ENCODE measurements at regions of chr6 and their contacts with region 1.

Region 1: DNA sequence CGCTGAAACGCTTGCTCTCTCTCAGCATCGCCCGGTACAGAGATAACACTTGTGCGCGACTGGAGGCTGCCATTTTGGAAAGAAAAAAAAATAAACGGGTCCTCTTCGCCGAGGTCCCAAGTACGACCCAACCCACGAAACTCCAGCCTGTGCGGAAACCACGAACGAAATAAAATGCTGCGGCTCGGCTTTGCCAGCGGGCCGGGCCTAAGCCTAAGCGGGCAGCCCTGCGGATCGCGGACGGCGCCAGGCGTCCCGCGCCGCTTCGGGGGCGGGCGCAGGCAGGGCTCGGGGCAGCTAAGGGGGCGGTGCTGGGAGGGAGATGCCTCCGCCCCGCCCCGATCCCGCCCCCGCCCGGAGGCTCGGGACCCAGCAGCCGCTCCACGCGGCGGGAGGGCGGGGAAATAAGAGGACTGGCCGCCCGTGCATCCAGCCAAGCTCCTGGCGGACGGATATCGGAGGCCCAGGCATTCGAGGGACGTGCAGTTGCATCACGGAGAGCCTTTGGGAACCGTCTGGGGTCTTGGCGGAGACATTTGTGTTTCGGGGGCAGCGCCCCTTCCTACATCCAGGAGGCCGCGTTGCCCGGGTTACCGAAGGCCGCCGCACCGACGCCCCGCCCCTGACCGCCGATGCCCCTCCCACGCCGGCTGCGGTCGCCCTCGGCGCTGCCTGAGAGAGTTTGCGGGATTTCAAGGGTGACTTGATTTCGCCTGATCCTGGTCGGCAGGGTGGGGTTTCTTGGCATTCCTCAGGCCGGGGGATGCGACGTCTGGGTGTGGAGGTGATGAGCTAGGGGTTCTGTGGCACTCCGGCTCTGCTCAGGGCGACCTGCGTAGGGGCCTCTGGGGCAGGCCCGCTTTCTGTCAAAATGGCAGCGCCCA is at the starts of genes FARS2 and LYRM4:
- DNase-seq: peak; percentile 86 to 99 (median 97)
- ATAC-seq: peak; percentile 91
- H3K4me3 ChIP-seq: peak within 1 kb of the TSS; percentile 63
- H3K4me3 Mint-ChIP-seq: peak within 1 kb of the TSS; percentile 94 to 100 (median 98)
- H3K27ac ChIP-seq: peak within 1 kb of the TSS; percentile 93
- H3K27ac Mint-ChIP-seq: peak within 1 kb of the TSS; percentile 99 to 100 (median 100)
- H3K4me1 ChIP-seq: peaks cover 9 to 13% of the 10 kb centered on the region in 2 donors
- H3K4me1 Mint-ChIP-seq: peaks cover 18 to 63% (median 43%) of the 10 kb centered on the region in 7 donors
- H3K27me3 ChIP-seq: no peaks in the 10 kb centered on the region
- H3K27me3 Mint-ChIP-seq: no peaks in the 10 kb centered on the region
- total RNA-seq, gene FARS2: 16.2 to 23.1 (median 20.3) TPM
- total RNA-seq, gene LYRM4: 15.1 to 27.2 (median 22.4) TPM

Region 2: DNA sequence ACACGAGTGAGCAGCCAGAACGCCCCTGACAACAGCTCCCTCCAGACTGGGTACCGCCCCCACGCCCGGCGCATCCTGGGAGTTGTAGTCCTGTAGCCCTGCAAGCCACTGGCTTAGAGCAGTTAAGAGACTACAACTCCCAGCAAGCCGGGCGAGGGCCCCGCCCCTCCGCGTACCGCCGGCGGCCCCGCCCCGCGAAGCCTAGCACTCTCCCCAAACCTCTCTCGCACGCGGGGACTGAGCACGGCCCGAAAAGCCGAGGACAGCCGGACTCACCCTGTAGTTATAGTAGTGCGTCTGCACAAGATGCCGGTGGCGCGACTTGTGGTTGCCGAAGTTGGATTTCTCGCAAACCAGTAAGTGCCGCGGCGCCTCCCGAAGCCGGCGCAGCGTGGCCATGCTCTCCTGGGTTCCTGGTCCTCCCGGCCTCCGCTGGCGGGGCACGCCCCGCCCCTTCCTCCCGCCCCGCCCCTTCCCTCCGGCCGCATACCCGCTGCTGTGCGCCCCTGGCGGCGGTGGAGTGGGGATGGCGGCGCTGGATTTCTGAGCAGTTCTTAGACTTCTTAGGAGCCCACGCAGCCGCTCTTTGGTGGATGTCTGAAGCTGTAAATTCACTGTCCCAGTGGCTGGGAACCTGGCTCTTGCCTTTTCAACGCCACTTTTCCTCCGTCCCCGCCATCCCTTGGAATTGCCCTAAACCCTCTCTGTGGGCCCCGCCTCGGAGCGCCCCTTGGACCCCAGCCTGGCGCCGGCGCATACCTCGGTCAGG is 257.1 kb before region 1 on chr6 and contains the start of gene RPP40:
- CTCF ChIA-PET with region 1: no interaction called
- POLR2A ChIA-PET with region 1: no interaction called
- intact Hi-C with region 1: loop called (anchors 1 kb)
- DNase-seq: peak; percentile 97 to 99 (median 99)
- ATAC-seq: peak; percentile 97
- H3K4me3 ChIP-seq: peak within 1 kb of the TSS; percentile 91
- H3K4me3 Mint-ChIP-seq: peak within 1 kb of the TSS; percentile 88 to 95 (median 94)
- H3K27ac ChIP-seq: peak within 1 kb of the TSS; percentile 82
- H3K27ac Mint-ChIP-seq: peak within 1 kb of the TSS; percentile 91 to 98 (median 94)
- H3K4me1 ChIP-seq: peaks cover 9% of the 10 kb centered on the region in 2 donors
- H3K4me1 Mint-ChIP-seq: peaks cover 0 to 20% (median 13%) of the 10 kb centered on the region in 7 donors
- H3K27me3 ChIP-seq: no peaks in the 10 kb centered on the region
- H3K27me3 Mint-ChIP-seq: no peaks in the 10 kb centered on the region
- total RNA-seq, gene RPP40: 3.8 to 8.0 (median 5.1) TPM

Region 3: DNA sequence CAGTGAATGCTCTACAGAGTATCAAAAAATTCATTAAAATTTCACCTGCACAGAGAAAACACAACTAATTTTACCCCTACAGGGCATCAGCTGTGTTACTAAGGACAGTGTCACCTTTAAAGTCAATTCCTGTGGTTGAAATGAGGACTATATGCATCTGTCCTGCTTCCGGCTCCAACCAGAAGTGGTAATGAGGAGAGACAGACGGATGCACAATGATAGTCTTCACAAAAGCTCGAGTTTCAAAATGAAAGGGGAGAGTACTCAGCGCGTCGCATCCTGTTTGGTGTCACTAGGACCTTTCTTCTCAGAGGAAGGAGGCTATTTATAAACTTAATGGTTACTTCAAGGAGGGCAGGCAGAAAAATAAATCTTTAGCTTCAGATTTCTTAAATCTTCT is 86.7 kb before region 1 on chr6:
- CTCF ChIA-PET with region 1: interaction called, 6 read pairs
- POLR2A ChIA-PET with region 1: interaction called, 20 read pairs
- intact Hi-C with region 1: loop called (anchors 1 kb)
- DNase-seq: peak in 8 of 9 donors; percentile 34 to 79 (median 71)
- ATAC-seq: peak; percentile 93
- H3K4me3 ChIP-seq: peak overlapping the region; percentile 46
- H3K4me3 Mint-ChIP-seq: peak overlapping the region; percentile 18 to 86 (median 78)
- H3K27ac ChIP-seq: peak overlapping the region; percentile 67
- H3K27ac Mint-ChIP-seq: peak overlapping the region; percentile 79 to 96 (median 92)
- H3K4me1 ChIP-seq: peaks cover 23 to 38% of the 10 kb centered on the region in 2 donors
- H3K4me1 Mint-ChIP-seq: peaks cover 31 to 75% (median 64%) of the 10 kb centered on the region in 7 donors
- H3K27me3 ChIP-seq: no peaks in the 10 kb centered on the region
- H3K27me3 Mint-ChIP-seq: no peaks in the 10 kb centered on the region

Region 4: GRCh38 chr6:5279891-5280338 is 19.0 kb after region 1 on chr6:
- CTCF ChIA-PET with region 1: no interaction called
- POLR2A ChIA-PET with region 1: no interaction called
- intact Hi-C with region 1: loop called in 1 of 2 experiments (anchors 1 kb)
- DNase-seq: no peak
- ATAC-seq: peak; percentile 18
- H3K4me3 ChIP-seq: no peak overlapping the region
- H3K4me3 Mint-ChIP-seq: peak overlapping the region in 1 of 10 donors; percentile 64
- H3K27ac ChIP-seq: no peak overlapping the region
- H3K27ac Mint-ChIP-seq: peak overlapping the region in 1 of 9 donors; percentile 70
- H3K4me1 ChIP-seq: no peaks in the 10 kb centered on the region
- H3K4me1 Mint-ChIP-seq: peaks cover 17 to 58% (median 39%) of the 10 kb centered on the region in 7 donors
- H3K27me3 ChIP-seq: no peaks in the 10 kb centered on the region
- H3K27me3 Mint-ChIP-seq: no peaks in the 10 kb centered on the region

Region 5: DNA sequence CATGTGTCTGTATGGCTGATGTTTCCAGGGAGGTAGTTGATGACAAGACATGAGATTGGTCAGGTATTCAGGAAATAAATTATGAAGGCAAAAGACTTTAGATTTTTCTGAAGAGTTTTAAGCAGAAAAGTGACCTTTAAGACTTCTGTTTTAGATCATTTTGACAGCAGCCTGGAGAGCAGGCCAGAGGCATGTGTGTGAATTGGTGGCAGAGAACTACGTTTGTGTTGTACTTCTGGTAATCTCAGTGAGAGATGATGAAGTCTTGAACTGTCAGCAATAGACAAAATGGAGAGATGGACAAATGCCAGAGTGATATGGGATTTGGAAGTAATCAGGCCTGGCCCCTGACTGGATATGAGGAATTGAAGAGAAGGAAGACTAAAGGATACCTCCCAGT is 31.3 kb after region 1 on chr6:
- CTCF ChIA-PET with region 1: no interaction called
- POLR2A ChIA-PET with region 1: no interaction called
- intact Hi-C with region 1: no loop called
- DNase-seq: no peak
- ATAC-seq: no peak
- H3K4me3 ChIP-seq: no peak overlapping the region
- H3K4me3 Mint-ChIP-seq: no peak overlapping the region
- H3K27ac ChIP-seq: no peak overlapping the region
- H3K27ac Mint-ChIP-seq: peak overlapping the region in 1 of 9 donors; percentile 40
- H3K4me1 ChIP-seq: peaks cover 0 to 5% of the 10 kb centered on the region in 2 donors
- H3K4me1 Mint-ChIP-seq: peaks cover 26 to 63% (median 49%) of the 10 kb centered on the region in 7 donors
- H3K27me3 ChIP-seq: no peaks in the 10 kb centered on the region
- H3K27me3 Mint-ChIP-seq: no peaks in the 10 kb centered on the region

Region 6: GRCh38 chr6:5379647-5380242 is 118.8 kb after region 1 on chr6:
- CTCF ChIA-PET with region 1: no interaction called
- POLR2A ChIA-PET with region 1: no interaction called
- intact Hi-C with region 1: no loop called
- DNase-seq: peak in 1 of 9 donors; percentile 28
- ATAC-seq: no peak
- H3K4me3 ChIP-seq: no peak overlapping the region
- H3K4me3 Mint-ChIP-seq: no peak overlapping the region
- H3K27ac ChIP-seq: no peak overlapping the region
- H3K27ac Mint-ChIP-seq: no peak overlapping the region
- H3K4me1 ChIP-seq: no peaks in the 10 kb centered on the region
- H3K4me1 Mint-ChIP-seq: peaks cover 0 to 14% (median 6%) of the 10 kb centered on the region in 7 donors
- H3K27me3 ChIP-seq: no peaks in the 10 kb centered on the region
- H3K27me3 Mint-ChIP-seq: no peaks in the 10 kb centered on the region

Region 7: GRCh38 chr6:5398530-5398929 is 137.6 kb after region 1 on chr6:
- CTCF ChIA-PET with region 1: no interaction called
- POLR2A ChIA-PET with region 1: no interaction called
- intact Hi-C with region 1: loop called in 1 of 2 experiments (anchors 10 kb)
- DNase-seq: peak in 6 of 9 donors; percentile 17 to 43 (median 33)
- ATAC-seq: peak; percentile 71
- H3K4me3 ChIP-seq: no peak overlapping the region
- H3K4me3 Mint-ChIP-seq: no peak overlapping the region
- H3K27ac ChIP-seq: no peak overlapping the region
- H3K27ac Mint-ChIP-seq: no peak overlapping the region
- H3K4me1 ChIP-seq: no peaks in the 10 kb centered on the region
- H3K4me1 Mint-ChIP-seq: peaks cover 3 to 18% (median 9%) of the 10 kb centered on the region in 7 donors
- H3K27me3 ChIP-seq: no peaks in the 10 kb centered on the region
- H3K27me3 Mint-ChIP-seq: no peaks in the 10 kb centered on the region

Region 8: GRCh38 chr6:7140631-7141378 is 1879.9 kb after region 1 on chr6:
- CTCF ChIA-PET with region 1: no interaction called
- POLR2A ChIA-PET with region 1: no interaction called
- intact Hi-C with region 1: loop called in 1 of 2 experiments (anchors 2 kb)
- DNase-seq: peak; percentile 69 to 86 (median 78)
- ATAC-seq: peak; percentile 89
- H3K4me3 ChIP-seq: peak overlapping the region; percentile 73
- H3K4me3 Mint-ChIP-seq: peak overlapping the region; percentile 80 to 92 (median 88)
- H3K27ac ChIP-seq: peak overlapping the region; percentile 91
- H3K27ac Mint-ChIP-seq: peak overlapping the region; percentile 85 to 99 (median 96)
- H3K4me1 ChIP-seq: peaks cover 22 to 51% of the 10 kb centered on the region in 2 donors
- H3K4me1 Mint-ChIP-seq: peaks cover 45 to 91% (median 85%) of the 10 kb centered on the region in 7 donors
- H3K27me3 ChIP-seq: no peaks in the 10 kb centered on the region
- H3K27me3 Mint-ChIP-seq: no peaks in the 10 kb centered on the region

Measured in naive thymus-derived CD4-positive, alpha-beta T cell (primary cell).